ENCODE measurements at regions of chr20 and their contacts with region 1.

Region 1: DNA sequence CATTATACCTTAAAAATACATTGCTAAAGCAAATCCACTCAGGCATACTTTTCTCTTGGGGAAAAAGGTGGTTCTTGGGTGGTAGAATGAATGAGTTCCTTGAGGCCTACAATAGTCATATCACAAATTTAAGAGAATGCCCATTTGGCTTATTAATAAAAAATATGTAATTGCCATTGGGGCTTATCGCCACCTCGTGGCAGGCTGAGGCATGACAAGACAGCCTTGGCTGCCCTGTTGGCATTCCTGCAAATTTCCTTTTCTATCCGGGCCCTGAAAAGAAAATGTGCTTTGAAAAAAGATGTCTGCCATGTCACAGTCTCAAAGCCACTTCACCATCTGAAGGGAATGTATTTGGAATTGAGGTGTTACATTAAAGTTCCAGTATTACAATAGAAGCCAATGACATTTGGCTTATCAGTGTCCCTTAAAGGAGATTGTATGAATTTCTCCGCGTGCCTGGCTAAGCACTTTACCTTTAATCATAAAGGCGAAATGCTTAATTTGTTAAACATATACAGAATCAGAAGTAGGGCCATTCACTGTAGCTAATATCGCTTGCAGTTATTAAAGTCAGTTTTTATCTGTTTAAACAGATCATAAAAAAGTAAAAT is 188.3 kb upstream of the ZFP64 start:
- DNase-seq: peak; percentile 15
- ATAC-seq: no peak; the same call in 2 of the 3 replicates
- H3K4me3 ChIP-seq: no peak overlapping the region
- H3K27ac ChIP-seq: no peak overlapping the region
- H3K4me1 ChIP-seq: no peaks in the 10 kb centered on the region
- H3K27me3 ChIP-seq: no peaks in the 10 kb centered on the region
- CTCF ChIP-seq: peak; percentile 79
- EP300 ChIP-seq: no peak
- POLR2A ChIP-seq: no peak
- RAD21 ChIP-seq: peak; percentile 50; the same call in 1 of the 2 replicates

Region 2: DNA sequence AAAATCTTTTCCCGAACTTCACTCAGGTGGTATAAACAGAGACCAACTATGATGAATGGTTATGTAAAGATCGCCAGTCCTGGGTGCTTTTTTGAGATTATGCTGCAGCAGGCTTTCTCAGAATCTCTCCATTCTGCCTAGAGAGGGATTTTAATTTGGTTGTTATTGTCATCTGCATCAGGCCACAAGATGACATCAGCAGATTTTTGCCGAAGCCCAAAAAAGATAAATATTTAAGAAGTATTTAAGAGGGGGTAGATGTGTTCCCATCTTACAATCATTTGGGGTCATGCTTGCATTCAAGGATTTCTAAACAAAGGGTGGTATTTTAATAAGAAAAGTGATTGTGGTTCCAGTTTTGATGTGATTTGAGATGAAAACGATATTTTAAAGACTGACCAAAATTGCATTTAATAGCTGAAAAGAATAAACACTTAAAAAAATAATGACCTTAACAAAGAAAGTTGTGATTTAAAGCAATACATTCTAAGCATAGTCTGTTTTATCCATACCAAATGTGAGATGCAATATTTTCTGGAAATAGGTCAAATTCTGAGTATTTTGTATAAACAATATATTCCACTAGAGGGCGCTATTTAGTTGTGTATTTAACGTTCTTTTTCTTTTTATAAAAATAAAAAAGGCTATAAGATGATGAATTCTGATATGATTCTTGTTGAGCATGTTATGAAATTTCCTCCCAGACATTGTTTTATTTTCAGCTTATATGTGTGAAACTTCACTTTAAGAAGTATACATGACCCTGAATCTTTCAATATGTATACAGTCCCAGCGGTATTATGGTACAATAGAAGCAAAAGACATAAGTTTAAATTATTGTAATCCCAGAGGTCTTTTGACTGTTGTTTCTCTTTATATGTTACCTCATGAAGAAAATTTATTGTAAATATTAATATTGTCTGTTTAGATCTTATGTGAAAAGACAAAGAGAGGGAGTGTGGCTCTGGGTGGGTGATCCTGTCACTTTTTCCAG is 137.3 kb before region 1 on chr20:
- CTCF ChIA-PET with region 1: interaction called, 15 read pairs
- POLR2A ChIA-PET with region 1: no interaction called
- in situ Hi-C with region 1: loop called (anchors 10 kb)
- intact Hi-C with region 1: loop called (anchors 1 kb)
- DNase-seq: no peak
- ATAC-seq: no peak
- H3K4me3 ChIP-seq: no peak overlapping the region
- H3K27ac ChIP-seq: no peak overlapping the region
- H3K4me1 ChIP-seq: peaks cover 4% of the 10 kb centered on the region; the same call in 1 of the 2 replicates
- H3K27me3 ChIP-seq: no peaks in the 10 kb centered on the region; a peak in 1 of 5 replicates
- CTCF ChIP-seq: peak; percentile 45
- EP300 ChIP-seq: no peak
- POLR2A ChIP-seq: no peak
- RAD21 ChIP-seq: no peak

Region 3: GRCh38 chr20:52312132-52312729 is 67.6 kb before region 1 on chr20:
- CTCF ChIA-PET with region 1: interaction called, 27 read pairs
- POLR2A ChIA-PET with region 1: no interaction called
- in situ Hi-C with region 1: loop called (anchors 5 kb)
- intact Hi-C with region 1: loop called (anchors 1 kb)
- DNase-seq: peak; percentile 70
- ATAC-seq: peak; percentile 81
- H3K4me3 ChIP-seq: no peak overlapping the region
- H3K27ac ChIP-seq: no peak overlapping the region
- H3K4me1 ChIP-seq: peaks cover 10% of the 10 kb centered on the region; the same call in 1 of the 2 replicates
- H3K27me3 ChIP-seq: peaks cover 5 to 12% of the 10 kb centered on the region in 2 experiments; a peak in 3 of 5 replicates
- CTCF ChIP-seq: peak; percentile 82
- EP300 ChIP-seq: no peak
- POLR2A ChIP-seq: no peak
- RAD21 ChIP-seq: peak; percentile 53; the same call in 1 of the 2 replicates